CD8-positive, alpha-beta T cell (primary cell): ENCODE measurements at regions of chr3 and their contacts with region 1.

Region 1: DNA sequence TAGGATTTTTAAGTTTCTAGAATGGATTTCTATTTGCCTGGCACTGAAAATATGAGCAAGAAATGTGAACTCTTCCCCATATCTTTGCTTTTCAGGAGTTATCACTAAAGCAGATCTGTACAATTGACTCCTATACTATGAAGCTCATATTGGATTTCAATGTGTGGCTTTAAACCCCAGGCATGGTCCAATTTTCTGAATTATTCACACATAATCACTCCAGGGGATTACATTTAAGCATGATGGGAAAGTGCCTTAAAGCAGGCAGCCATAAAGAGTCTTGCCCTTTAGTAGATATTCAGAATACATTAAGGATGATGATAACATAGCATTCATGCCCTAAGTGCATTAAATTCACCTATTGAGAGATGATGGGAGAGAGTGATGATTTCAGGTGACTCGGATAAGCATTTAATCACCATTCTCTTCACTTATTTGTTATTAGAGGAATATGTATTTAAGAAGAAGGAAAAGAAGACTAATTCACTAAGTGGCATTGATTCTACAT is 331.8 kb upstream of the ROBO1 start:
- DNase-seq: no peak
- ATAC-seq: no peak
- H3K4me3 ChIP-seq: no peak overlapping the region
- H3K4me3 Mint-ChIP-seq: no peak overlapping the region
- H3K27ac ChIP-seq: no peak overlapping the region
- H3K27ac Mint-ChIP-seq: no peak overlapping the region
- H3K4me1 ChIP-seq: no peaks in the 10 kb centered on the region
- H3K4me1 Mint-ChIP-seq: no peaks in the 10 kb centered on the region
- H3K27me3 ChIP-seq: no peaks in the 10 kb centered on the region
- H3K27me3 Mint-ChIP-seq: no peaks in the 10 kb centered on the region
- CTCF ChIP-seq: no peak

Region 2: GRCh38 chr3:80036176-80036575 is 63.4 kb before region 1 on chr3:
- CTCF ChIA-PET with region 1: no interaction called
- POLR2A ChIA-PET with region 1: no interaction called
- intact Hi-C with region 1: loop called in 1 of 2 experiments (anchors 2 kb)
- DNase-seq: no peak
- ATAC-seq: no peak
- H3K4me3 ChIP-seq: no peak overlapping the region
- H3K4me3 Mint-ChIP-seq: no peak overlapping the region
- H3K27ac ChIP-seq: no peak overlapping the region
- H3K27ac Mint-ChIP-seq: no peak overlapping the region
- H3K4me1 ChIP-seq: no peaks in the 10 kb centered on the region
- H3K4me1 Mint-ChIP-seq: no peaks in the 10 kb centered on the region
- H3K27me3 ChIP-seq: no peaks in the 10 kb centered on the region
- H3K27me3 Mint-ChIP-seq: no peaks in the 10 kb centered on the region
- CTCF ChIP-seq: no peak